ENCODE measurements at regions of chr1 and their contacts with region 1.

Region 1: DNA sequence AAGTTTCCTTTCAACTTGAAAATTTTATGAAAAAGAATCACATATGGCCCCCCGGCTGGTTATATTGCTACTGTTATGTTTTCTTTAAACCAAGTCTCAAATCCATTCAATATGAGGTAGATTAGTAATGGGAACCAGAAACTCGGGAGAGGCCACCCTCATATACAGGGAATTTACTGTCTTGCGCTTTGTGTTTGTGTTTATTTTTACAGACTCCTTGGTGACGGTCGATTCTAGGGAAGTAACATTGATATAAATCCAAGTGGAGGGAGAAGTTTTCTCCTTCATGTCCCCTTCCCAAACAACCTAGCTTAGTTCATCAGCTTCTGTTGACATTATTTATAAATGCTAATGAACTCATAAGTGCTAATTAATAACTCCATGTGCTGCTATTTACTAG is 163.5 kb upstream of the LMO4 start:
- DNase-seq: no peak
- H3K4me3 ChIP-seq: no peak overlapping the region
- H3K27ac ChIP-seq: no peak overlapping the region
- H3K4me1 ChIP-seq: no peaks in the 10 kb centered on the region
- H3K27me3 ChIP-seq: no peaks in the 10 kb centered on the region
- CTCF ChIP-seq: no peak
- EP300 ChIP-seq: no peak
- POLR2A ChIP-seq: no peak
- RAD21 ChIP-seq: no peak

Region 2: GRCh38 chr1:87151500-87152421 is 13.4 kb before region 1 on chr1:
- CTCF ChIA-PET with region 1: interaction called, 30 read pairs
- POLR2A ChIA-PET with region 1: interaction called, 3 read pairs
- DNase-seq: peak; percentile 63 to 82
- H3K4me3 ChIP-seq: peak overlapping the region; percentile 15 to 54 (median 24); a peak in 6 of 8 replicates
- H3K27ac ChIP-seq: no peak overlapping the region
- H3K4me1 ChIP-seq: peaks cover 2 to 28% (median 13%) of the 10 kb centered on the region in 4 experiments
- H3K27me3 ChIP-seq: peaks cover 0 to 3% (median 1%) of the 10 kb centered on the region in 4 experiments; a peak in 3 of 7 replicates
- CTCF ChIP-seq: peak; percentile 62 to 80 (median 75)
- EP300 ChIP-seq: no peak
- POLR2A ChIP-seq: no peak
- RAD21 ChIP-seq: peak; percentile 91 to 92